ENCODE measurements at regions of chr7 and their contacts with region 1.

Region 1: DNA sequence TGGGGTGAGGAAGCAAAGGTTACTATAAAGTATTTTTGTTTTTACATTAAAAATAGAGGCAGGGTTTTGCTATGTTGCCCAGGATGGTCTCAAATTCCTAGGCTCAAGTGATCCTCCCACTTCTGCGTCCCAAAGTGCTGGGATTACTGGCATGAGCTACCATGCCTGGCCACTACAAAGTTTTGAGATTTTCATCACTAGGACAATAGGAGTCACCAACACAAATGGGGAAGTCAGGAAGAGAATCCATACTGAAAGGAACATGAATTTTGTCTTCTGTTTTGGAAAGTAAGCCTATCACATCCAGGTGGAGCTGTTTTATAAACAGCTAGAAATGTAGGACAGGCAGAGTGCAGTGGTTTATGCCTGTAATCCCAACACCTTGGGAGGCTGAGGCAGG is 20.0 kb upstream of the CAPZA2 start:
- DNase-seq: no peak
- ATAC-seq: no peak
- H3K4me3 ChIP-seq: no peak overlapping the region
- H3K4me3 Mint-ChIP-seq: no peak overlapping the region
- H3K27ac ChIP-seq: no peak overlapping the region
- H3K27ac Mint-ChIP-seq: no peak overlapping the region
- H3K4me1 ChIP-seq: no peaks in the 10 kb centered on the region
- H3K4me1 Mint-ChIP-seq: peaks cover 0 to 11% (median 5%) of the 10 kb centered on the region in 7 donors
- H3K27me3 ChIP-seq: peaks cover 0 to 4% of the 10 kb centered on the region in 2 donors
- H3K27me3 Mint-ChIP-seq: peaks cover 14 to 37% (median 19%) of the 10 kb centered on the region in 5 donors

Region 2: GRCh38 chr7:116614499-116615262 is 227.7 kb before region 1 on chr7:
- CTCF ChIA-PET with region 1: no interaction called
- POLR2A ChIA-PET with region 1: no interaction called
- intact Hi-C with region 1: no loop called
- DNase-seq: no peak
- ATAC-seq: no peak
- H3K4me3 ChIP-seq: no peak overlapping the region
- H3K4me3 Mint-ChIP-seq: no peak overlapping the region
- H3K27ac ChIP-seq: no peak overlapping the region
- H3K27ac Mint-ChIP-seq: no peak overlapping the region
- H3K4me1 ChIP-seq: no peaks in the 10 kb centered on the region
- H3K4me1 Mint-ChIP-seq: no peaks in the 10 kb centered on the region
- H3K27me3 ChIP-seq: no peaks in the 10 kb centered on the region
- H3K27me3 Mint-ChIP-seq: peaks cover 13 to 36% (median 19%) of the 10 kb centered on the region in 5 donors

Region 3: DNA sequence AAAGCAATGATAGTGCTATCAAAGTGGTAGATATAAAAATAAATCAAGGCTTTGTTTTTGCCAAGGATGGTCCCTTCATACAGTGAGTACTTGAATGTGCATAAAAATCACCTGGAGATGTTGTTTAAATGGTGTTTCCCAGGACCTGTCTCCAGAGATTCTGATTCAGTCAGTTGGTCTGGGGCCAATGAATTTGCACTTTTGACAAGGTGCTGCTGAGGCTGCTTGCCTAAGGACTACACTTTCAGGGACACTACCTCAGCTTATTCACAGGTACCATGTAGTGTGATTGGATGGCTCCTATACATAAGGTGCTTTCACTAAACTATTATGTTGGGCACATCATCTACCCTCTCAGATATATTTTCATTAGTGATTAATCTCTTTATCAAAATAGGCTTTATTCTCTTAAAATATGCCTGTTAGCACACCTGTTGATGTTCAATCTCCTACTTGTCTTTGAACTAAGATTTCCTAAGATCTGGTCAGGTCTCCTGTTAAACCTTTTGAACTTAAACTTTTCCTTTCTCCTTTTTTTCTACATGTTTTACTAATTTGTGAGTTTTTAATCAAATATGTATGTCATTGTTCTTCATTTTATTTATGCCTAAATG is 44.3 kb after region 1 on chr7:
- CTCF ChIA-PET with region 1: interaction called, 11 read pairs
- POLR2A ChIA-PET with region 1: no interaction called
- intact Hi-C with region 1: no loop called
- DNase-seq: no peak
- ATAC-seq: no peak
- H3K4me3 ChIP-seq: no peak overlapping the region
- H3K4me3 Mint-ChIP-seq: no peak overlapping the region
- H3K27ac ChIP-seq: no peak overlapping the region
- H3K27ac Mint-ChIP-seq: peak overlapping the region in 2 of 9 donors; percentile 5 to 34
- H3K4me1 ChIP-seq: peaks cover 0 to 3% of the 10 kb centered on the region in 2 donors
- H3K4me1 Mint-ChIP-seq: peaks cover 15 to 53% (median 38%) of the 10 kb centered on the region in 7 donors
- H3K27me3 ChIP-seq: no peaks in the 10 kb centered on the region
- H3K27me3 Mint-ChIP-seq: no peaks in the 10 kb centered on the region

Measured in naive thymus-derived CD4-positive, alpha-beta T cell (primary cell).